Dorsolateral prefrontal cortex (tissue), 120 donors: ENCODE measurements at regions of chr2 and their contacts with region 1.

Region 1: DNA sequence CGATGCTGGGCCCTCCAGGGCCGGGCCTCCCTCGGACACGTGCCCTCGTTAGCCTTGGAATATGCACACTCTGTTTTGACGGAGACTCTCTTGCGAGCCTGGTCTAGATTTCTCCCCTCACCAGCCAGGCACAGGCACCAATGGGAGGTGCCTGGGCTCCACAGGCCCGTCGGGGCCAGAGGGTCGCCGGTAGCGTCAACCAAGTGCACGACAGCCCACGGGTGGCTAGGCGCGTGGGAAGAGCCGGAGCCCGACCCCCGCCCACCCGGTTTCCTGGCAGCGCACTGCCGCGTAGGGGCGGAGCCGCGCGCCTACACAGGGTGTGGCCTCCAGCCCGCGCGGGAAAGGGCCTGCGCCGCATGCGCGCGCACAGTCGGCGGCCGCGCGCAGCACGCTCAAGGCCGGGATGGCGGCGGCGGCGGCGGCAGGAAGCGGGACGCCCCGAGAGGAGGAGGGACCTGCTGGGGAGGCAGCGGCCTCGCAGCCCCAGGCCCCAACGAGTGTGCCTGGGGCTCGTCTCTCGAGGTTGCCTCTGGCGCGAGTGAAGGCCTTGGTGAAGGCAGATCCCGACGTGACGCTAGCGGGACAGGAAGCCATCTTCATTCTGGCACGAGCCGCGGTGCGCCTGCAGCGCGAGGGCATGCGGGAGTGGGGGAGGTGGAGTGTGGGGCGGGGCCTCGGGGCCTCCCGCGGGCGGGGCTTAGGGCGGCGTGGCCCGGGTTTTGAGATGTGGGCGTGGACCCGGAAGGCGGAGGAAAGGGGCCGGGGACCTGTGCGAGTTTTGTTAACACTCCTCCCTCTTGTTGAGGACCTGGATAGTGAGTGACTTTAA is at the start of gene POLE4:
- DNase-seq: peak; percentile 80 to 92 (median 88)
- H3K4me3 ChIP-seq: peak within 1 kb of the TSS; percentile 52 to 84 (median 72)
- H3K27ac ChIP-seq: peak within 1 kb of the TSS; percentile 59 to 97 (median 91)
- H3K27me3 ChIP-seq: no peaks in the 10 kb centered on the region
- CTCF ChIP-seq: peak in 26 of 56 donors; percentile 6 to 57 (median 28)
- total RNA-seq, gene POLE4: 27.8 to 68.1 (median 45.1) TPM

Region 2: DNA sequence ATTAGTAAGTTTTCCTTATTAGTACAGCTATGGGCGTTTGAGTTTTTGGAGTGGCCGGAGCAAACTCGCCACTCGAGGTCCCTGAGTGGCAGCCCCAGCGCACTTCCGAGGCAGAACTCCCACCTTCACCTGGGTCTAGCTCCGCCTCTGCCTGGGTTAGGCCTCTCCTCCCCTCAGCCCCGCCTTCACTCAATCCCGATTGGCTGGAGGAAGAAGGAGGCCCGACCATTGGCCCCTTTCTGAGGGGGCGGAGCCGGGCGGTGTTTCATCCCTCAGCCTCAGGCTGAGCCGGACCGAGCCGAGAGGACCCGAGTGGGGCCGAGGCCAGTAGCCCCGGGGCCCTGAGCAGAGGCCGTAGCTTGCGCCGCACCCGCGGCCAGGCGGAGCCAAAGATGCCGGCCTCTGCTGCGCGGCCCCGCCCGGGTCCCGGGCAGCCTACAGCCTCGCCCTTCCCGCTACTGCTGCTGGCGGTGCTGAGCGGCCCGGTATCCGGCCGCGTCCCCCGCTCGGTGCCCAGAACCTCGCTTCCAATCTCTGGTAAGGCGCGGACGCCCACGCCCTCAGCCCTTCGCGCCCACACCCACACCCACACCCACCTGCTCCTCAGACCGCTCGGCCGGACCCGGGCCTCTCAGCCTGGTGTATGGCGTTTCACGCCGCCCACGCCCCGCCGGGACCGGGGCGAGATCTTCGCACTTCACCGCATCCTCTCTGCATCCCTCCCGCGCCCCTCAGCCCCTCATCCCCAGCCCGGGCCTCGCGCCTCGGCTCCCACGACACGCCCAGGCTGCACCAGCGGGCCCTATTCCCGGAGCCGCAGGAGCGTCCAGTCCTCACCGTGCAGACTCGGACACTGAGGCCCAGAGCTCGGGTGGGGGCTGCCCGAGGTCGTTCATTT is 304.3 kb before region 1 on chr2 and contains the start of gene SEMA4F:
- intact Hi-C with region 1: loop called in 1 of 2 experiments (anchors 2 kb)
- DNase-seq: peak; percentile 89 to 99 (median 96)
- H3K4me3 ChIP-seq: peak within 1 kb of the TSS; percentile 59 to 95 (median 84)
- H3K27ac ChIP-seq: peak within 1 kb of the TSS in 38 of 59 donors; percentile 1 to 85 (median 62)
- H3K27me3 ChIP-seq: peaks cover 0 to 3% (median 0%) of the 10 kb centered on the region in 45 donors
- CTCF ChIP-seq: peak in 23 of 56 donors; percentile 3 to 42 (median 24)
- total RNA-seq, gene SEMA4F: 17.4 to 54.5 (median 34.8) TPM

Region 3: DNA sequence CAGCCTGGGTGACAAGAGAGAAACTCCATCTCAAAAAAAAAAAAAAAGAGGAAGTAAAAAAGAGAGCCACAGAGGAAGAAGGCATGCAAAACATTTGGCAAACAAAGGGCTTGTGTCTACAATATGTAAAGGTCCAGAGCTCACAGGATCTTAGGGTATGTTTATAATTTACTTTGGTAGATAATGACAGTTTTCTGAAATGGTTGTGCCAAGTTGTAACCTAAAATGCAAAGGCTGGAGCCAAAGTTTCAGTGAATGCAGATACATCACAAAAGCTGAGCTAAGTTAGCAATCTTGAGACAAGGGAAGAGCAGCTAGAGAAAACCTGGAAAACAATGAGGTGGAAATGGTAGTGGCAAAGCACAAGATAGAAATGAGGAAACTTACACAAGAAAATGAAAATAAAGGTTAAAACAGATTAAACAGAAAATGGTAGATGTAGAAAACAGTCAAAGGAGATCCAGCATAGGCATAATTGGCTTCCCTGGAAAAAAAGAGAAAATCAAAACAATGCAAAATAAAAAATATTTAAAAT is 202.1 kb before region 1 on chr2:
- intact Hi-C with region 1: no loop called
- DNase-seq: no peak
- H3K4me3 ChIP-seq: no peak overlapping the region
- H3K27ac ChIP-seq: no peak overlapping the region
- H3K27me3 ChIP-seq: peaks cover 0 to 3% (median 0%) of the 10 kb centered on the region in 45 donors
- CTCF ChIP-seq: no peak

Region 4: GRCh38 chr2:74887445-74887951 is 71.0 kb before region 1 on chr2:
- intact Hi-C with region 1: loop called in 1 of 2 experiments (anchors 10 kb)
- DNase-seq: no peak
- H3K4me3 ChIP-seq: no peak overlapping the region
- H3K27ac ChIP-seq: no peak overlapping the region
- H3K27me3 ChIP-seq: no peaks in the 10 kb centered on the region
- CTCF ChIP-seq: no peak

Region 5: GRCh38 chr2:75632091-75632701 is 673.7 kb after region 1 on chr2:
- intact Hi-C with region 1: loop called in 1 of 2 experiments (anchors 10 kb)
- DNase-seq: no peak
- H3K4me3 ChIP-seq: no peak overlapping the region
- H3K27ac ChIP-seq: no peak overlapping the region
- H3K27me3 ChIP-seq: peaks cover 0 to 4% (median 0%) of the 10 kb centered on the region in 45 donors
- CTCF ChIP-seq: no peak